Transverse colon (tissue), 4 donors: ENCODE measurements at regions of chr7 and their contacts with region 1.

Region 1: GRCh38 chr7:25851332-25852210 is 300.4 kb upstream of the NFE2L3 start:
- DNase-seq: peak; percentile 91
- H3K4me3 ChIP-seq: peak overlapping the region in 3 of 4 donors; percentile 5 to 39 (median 33)
- H3K27ac ChIP-seq: peak overlapping the region; percentile 85 to 94 (median 86)
- H3K4me1 ChIP-seq: peaks cover 41 to 77% (median 41%) of the 10 kb centered on the region in 4 donors
- H3K27me3 ChIP-seq: peaks cover 49% of the 10 kb centered on the region
- CTCF ChIP-seq: peak; percentile 81 to 96 (median 88)
- EP300 ChIP-seq: no peak
- POLR2A ChIP-seq: no peak

Region 2: GRCh38 chr7:25259587-25260243 is 591.9 kb before region 1 on chr7:
- in situ Hi-C with region 1: loop called (anchors 5 to 25 kb)
- intact Hi-C with region 1: loop called (anchors 5 kb)
- DNase-seq: peak; percentile 76
- H3K4me3 ChIP-seq: no peak overlapping the region
- H3K27ac ChIP-seq: peak overlapping the region in 2 of 4 donors; percentile 76 to 77
- H3K4me1 ChIP-seq: peaks cover 14 to 37% (median 29%) of the 10 kb centered on the region in 4 donors
- H3K27me3 ChIP-seq: no peaks in the 10 kb centered on the region
- CTCF ChIP-seq: peak; percentile 82 to 88 (median 83)
- EP300 ChIP-seq: no peak
- POLR2A ChIP-seq: no peak

Region 3: GRCh38 chr7:25408012-25408687 is 443.4 kb before region 1 on chr7:
- in situ Hi-C with region 1: loop called in 1 of 4 experiments (anchors 25 kb)
- intact Hi-C with region 1: no loop called
- DNase-seq: no peak
- H3K4me3 ChIP-seq: no peak overlapping the region
- H3K27ac ChIP-seq: peak overlapping the region in 1 of 4 donors; percentile 9
- H3K4me1 ChIP-seq: no peaks in the 10 kb centered on the region
- H3K27me3 ChIP-seq: no peaks in the 10 kb centered on the region
- CTCF ChIP-seq: no peak
- EP300 ChIP-seq: no peak
- POLR2A ChIP-seq: no peak

Region 4: DNA sequence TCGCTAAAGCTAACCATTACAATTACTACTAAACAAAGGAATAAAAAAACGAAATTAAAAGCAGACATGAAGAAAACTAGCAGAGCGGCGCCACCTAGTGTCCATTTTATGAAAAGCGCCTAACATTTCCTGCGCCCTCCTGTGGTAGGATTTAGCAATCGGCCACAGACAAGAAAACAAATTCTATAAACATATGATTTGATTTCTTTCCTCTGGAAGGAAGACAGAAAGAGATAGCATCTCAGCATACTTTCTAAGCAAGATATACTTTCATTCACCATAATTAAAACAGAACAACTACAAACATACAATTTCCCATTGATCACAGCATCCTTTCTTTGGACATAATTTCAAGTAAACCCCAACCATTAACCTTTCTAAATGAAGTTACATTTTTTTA is 285.6 kb before region 1 on chr7:
- in situ Hi-C with region 1: loop called in 3 of 4 experiments (anchors 5 to 10 kb)
- intact Hi-C with region 1: loop called (anchors 5 kb)
- DNase-seq: peak; percentile 73
- H3K4me3 ChIP-seq: no peak overlapping the region
- H3K27ac ChIP-seq: peak overlapping the region in 2 of 4 donors; percentile 4 to 49
- H3K4me1 ChIP-seq: peaks cover 0 to 19% (median 4%) of the 10 kb centered on the region in 4 donors
- H3K27me3 ChIP-seq: no peaks in the 10 kb centered on the region
- CTCF ChIP-seq: peak; percentile 100
- EP300 ChIP-seq: no peak
- POLR2A ChIP-seq: no peak

Region 5: GRCh38 chr7:25636871-25637283 is 214.7 kb before region 1 on chr7:
- in situ Hi-C with region 1: no loop called
- intact Hi-C with region 1: no loop called
- DNase-seq: no peak
- H3K4me3 ChIP-seq: no peak overlapping the region
- H3K27ac ChIP-seq: no peak overlapping the region
- H3K4me1 ChIP-seq: no peaks in the 10 kb centered on the region
- H3K27me3 ChIP-seq: no peaks in the 10 kb centered on the region
- CTCF ChIP-seq: no peak
- EP300 ChIP-seq: no peak
- POLR2A ChIP-seq: no peak

Region 6: GRCh38 chr7:25663877-25664276 is 187.7 kb before region 1 on chr7:
- in situ Hi-C with region 1: loop called in 1 of 4 experiments (anchors 25 kb)
- intact Hi-C with region 1: loop called (anchors 5 kb)
- DNase-seq: no peak
- H3K4me3 ChIP-seq: no peak overlapping the region
- H3K27ac ChIP-seq: peak overlapping the region; percentile 59 to 80 (median 72)
- H3K4me1 ChIP-seq: peaks cover 0 to 32% (median 11%) of the 10 kb centered on the region in 4 donors
- H3K27me3 ChIP-seq: no peaks in the 10 kb centered on the region
- CTCF ChIP-seq: no peak
- EP300 ChIP-seq: no peak
- POLR2A ChIP-seq: no peak

Region 7: DNA sequence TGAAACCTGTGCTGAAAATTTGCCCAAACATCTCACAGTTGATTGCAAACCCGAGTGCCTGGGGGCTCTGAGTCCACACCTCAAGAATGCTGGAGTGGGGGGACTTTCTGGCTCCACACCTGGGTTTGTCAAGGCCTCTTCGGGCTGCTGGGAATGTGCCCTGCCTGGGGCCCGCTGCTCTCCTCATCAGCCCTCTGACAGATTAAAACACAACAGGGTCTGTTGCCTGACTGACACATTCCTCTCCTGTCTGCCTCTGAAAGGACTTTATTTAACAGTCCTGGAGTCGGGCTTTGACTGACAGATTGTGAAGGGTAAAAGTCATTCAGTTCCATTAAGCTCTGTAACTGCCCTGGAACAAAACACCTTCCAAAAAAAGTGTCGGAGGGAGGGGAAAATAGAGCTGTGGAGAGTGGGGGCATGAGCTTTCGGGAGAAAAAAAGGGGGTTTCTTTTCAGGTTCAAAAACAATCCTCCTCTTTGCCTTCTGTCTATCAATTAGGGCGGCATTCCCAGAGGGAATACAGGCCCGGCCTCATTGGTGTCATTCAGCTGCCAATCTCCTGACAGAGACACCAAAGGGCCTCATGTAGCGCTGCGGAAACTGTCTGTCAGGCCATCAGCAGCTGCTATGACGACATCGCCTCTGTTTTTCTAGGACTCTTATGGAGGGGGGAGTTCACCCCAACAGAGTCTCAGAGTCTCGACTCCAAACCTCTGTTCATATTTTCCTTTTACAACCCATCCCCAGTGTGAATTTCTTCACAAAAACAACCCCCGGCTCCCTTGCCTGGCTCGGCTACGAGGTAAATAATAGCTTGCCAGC is 98.4 kb before region 1 on chr7:
- in situ Hi-C with region 1: no loop called
- intact Hi-C with region 1: loop called (anchors 5 kb)
- DNase-seq: no peak
- H3K4me3 ChIP-seq: no peak overlapping the region
- H3K27ac ChIP-seq: peak overlapping the region; percentile 51 to 84 (median 76)
- H3K4me1 ChIP-seq: peaks cover 0 to 23% (median 8%) of the 10 kb centered on the region in 4 donors
- H3K27me3 ChIP-seq: no peaks in the 10 kb centered on the region
- CTCF ChIP-seq: no peak
- EP300 ChIP-seq: no peak
- POLR2A ChIP-seq: no peak

Region 8: DNA sequence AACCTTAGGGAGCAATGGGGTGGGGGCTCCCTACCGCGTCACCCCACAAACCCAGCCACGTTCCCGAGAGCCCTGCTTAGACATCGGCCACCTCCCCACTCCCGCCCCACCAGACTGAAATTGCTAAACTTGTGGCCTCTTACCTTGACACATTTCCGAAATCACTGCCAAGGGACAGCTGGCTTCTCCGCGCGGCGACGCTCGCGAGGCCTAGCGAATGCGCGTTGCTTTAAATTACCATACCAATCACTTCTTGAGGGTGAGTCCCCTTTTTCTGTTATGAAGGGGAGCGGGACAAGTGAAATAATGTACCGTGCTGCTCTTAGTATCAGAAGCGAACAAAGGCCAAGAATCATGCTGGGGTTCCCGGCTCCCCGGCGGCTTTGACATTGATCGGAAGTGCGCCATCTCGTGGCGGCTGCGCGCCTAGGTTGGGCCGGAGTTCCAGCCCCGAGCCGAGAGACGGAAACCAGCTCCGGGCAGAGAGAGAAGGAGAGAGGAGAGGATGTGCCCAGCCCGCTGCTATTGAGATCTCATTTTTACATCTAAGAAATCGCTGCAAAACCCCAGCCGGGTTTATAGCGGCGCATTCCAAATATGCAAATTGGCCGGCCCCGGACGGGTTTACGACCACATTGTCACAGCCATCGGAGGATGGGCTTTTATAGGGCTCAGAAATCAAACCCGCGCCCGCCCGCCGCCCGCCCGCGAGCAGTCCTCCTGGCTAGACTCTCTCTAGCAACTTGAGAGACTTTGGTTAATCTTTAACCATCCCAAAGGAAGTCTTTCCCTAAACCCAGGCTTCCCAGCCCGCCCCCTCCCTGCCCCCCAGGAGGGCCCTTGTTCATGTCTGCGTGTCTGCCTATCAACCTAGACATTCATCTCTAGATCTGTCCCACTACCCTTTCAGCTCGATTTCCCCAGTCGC is 1328.2 kb after region 1 on chr7:
- in situ Hi-C with region 1: loop called (anchors 10 to 25 kb)
- intact Hi-C with region 1: no loop called
- DNase-seq: peak; percentile 87
- H3K4me3 ChIP-seq: peak overlapping the region; percentile 21 to 67 (median 60)
- H3K27ac ChIP-seq: peak overlapping the region; percentile 95 to 99 (median 98)
- H3K4me1 ChIP-seq: peaks cover 21 to 60% (median 49%) of the 10 kb centered on the region in 4 donors
- H3K27me3 ChIP-seq: peaks cover 32% of the 10 kb centered on the region
- CTCF ChIP-seq: peak; percentile 89 to 96 (median 93)
- EP300 ChIP-seq: no peak
- POLR2A ChIP-seq: peak; percentile 66